CD8-positive, alpha-beta memory T cell (primary cell): ENCODE measurements at regions of chr18 and their contacts with region 1.

Region 1: DNA sequence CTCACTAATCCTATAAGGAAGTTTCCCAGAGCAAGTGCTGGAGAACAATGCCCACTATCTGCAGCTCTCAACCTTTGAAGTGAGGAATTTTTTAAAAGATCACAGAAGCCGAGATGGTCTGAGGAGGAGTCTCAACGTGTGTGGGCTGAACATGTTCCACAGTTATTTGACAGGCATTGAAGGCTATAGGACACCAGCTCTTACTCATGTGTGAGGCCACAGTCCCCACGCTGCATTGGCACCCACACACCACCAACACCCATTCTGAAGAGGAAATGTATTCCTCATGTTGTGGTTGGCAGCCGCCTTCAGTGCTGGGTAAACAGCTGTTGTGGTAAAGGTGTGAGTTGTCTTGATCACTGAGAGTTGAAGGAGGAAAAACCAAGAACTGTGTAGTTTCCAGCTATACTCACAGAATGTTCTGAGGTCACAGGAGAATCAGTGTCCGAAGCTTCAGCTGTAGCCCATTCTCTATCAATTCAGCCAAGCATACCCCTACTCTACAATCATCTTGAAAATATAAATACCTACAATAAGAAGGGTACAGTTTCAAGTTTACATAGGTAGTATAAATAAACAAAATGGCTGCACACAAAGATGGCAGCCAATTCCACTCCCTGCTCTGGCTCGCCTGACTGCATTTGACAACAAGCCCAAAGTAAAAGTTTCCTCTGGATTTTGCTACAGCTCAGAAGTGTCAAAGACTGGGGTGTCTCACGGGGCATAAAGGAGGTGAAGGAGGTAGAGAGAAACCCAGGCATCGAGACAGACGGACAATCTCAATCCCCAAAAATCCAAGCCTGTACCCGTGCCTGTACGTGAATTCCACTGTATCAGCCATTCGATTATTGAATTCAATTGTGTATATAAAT is 12.1 kb downstream of the CD226 start:
- DNase-seq: peak; percentile 66 to 93 (median 77)
- H3K4me3 ChIP-seq: peak overlapping the region; percentile 30
- H3K4me3 Mint-ChIP-seq: no peak overlapping the region
- H3K27ac ChIP-seq: no peak overlapping the region
- H3K27ac Mint-ChIP-seq: peak overlapping the region in 1 of 8 donors; percentile 81
- H3K4me1 ChIP-seq: peaks cover 58% of the 10 kb centered on the region
- H3K4me1 Mint-ChIP-seq: peaks cover 5 to 29% (median 6%) of the 10 kb centered on the region in 3 donors
- H3K27me3 ChIP-seq: no peaks in the 10 kb centered on the region
- H3K27me3 Mint-ChIP-seq: peaks cover 0 to 5% of the 10 kb centered on the region in 2 donors

Region 2: GRCh38 chr18:69876490-69876889 is 59.1 kb before region 1 on chr18:
- CTCF ChIA-PET with region 1: no interaction called
- POLR2A ChIA-PET with region 1: interaction called, 20 read pairs
- DNase-seq: no peak
- H3K4me3 ChIP-seq: no peak overlapping the region
- H3K4me3 Mint-ChIP-seq: peak overlapping the region in 1 of 7 donors; percentile 44
- H3K27ac ChIP-seq: no peak overlapping the region
- H3K27ac Mint-ChIP-seq: peak overlapping the region in 4 of 8 donors; percentile 43 to 75 (median 54)
- H3K4me1 ChIP-seq: peaks cover 4% of the 10 kb centered on the region
- H3K4me1 Mint-ChIP-seq: peaks cover 33 to 78% (median 51%) of the 10 kb centered on the region in 3 donors
- H3K27me3 ChIP-seq: no peaks in the 10 kb centered on the region
- H3K27me3 Mint-ChIP-seq: no peaks in the 10 kb centered on the region

Region 3: DNA sequence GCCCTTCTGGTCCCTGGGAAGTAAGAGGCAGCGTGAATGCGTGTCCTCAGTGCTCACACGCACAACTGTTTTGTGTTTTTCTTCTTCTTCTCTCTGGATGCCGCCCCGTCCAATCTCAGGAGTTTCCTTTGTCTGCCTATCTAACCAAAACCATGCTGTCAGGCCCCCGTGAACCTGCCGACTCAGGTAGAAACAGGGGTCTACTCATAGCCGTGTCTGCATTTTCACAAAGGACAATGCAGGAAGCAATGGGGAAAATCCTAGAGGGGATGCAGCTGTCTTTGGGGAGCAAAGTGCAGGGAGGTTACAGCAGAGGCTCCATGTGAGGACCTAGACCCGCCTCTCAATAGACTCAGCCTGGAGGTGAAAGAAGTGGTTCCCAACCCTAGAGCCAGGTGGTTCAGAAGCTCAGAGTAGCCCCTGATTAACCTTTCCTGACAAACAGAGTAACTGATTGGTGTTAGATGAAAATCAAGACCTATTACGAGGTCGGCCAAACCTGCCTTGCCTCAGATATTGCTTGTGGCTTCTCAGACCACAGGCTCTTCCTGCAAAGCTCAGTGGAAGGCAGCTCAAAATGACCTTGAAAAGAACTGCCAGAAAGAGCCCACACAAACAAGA is 37.2 kb before region 1 on chr18:
- CTCF ChIA-PET with region 1: interaction called, 10 read pairs
- POLR2A ChIA-PET with region 1: interaction called, 14 read pairs
- DNase-seq: peak in 3 of 5 donors; percentile 14 to 52 (median 29)
- H3K4me3 ChIP-seq: peak overlapping the region; percentile 57
- H3K4me3 Mint-ChIP-seq: peak overlapping the region; percentile 67 to 91 (median 83)
- H3K27ac ChIP-seq: peak overlapping the region; percentile 9
- H3K27ac Mint-ChIP-seq: peak overlapping the region; percentile 86 to 99 (median 94)
- H3K4me1 ChIP-seq: peaks cover 44% of the 10 kb centered on the region
- H3K4me1 Mint-ChIP-seq: peaks cover 69 to 86% (median 81%) of the 10 kb centered on the region in 3 donors
- H3K27me3 ChIP-seq: no peaks in the 10 kb centered on the region
- H3K27me3 Mint-ChIP-seq: peaks cover 0 to 5% of the 10 kb centered on the region in 2 donors